ENCODE measurements at regions of chr2 and their contacts with region 1.

Region 1: GRCh38 chr2:171703574-171704347 is 16.5 kb downstream of the DYNC1I2 start:
- DNase-seq: no peak
- ATAC-seq: no peak
- H3K4me3 Mint-ChIP-seq: no peak overlapping the region
- H3K27ac Mint-ChIP-seq: no peak overlapping the region
- H3K4me1 Mint-ChIP-seq: peaks cover 8% of the 10 kb centered on the region
- H3K27me3 Mint-ChIP-seq: no peaks in the 10 kb centered on the region
- CTCF ChIP-seq: peak; percentile 76

Region 2: DNA sequence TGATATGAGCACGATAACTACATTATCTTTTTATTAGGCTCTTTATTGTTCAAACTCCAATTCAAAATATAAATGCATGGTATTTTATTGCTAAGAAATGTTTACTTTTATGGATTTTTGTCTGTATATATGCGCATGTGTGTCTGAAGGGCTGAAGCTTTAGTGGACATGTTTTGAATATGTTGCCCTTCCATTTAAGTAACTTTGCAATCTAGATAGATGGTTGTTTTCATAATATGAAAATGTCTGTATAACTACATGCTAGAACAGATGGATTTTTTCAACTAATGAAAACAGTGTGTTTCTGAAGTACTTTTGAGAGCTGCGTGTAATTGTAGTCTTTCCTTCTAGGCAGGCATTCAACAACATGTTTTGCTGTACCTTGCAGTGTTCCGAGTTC is 251.0 kb before region 1 on chr2:
- CTCF ChIA-PET with region 1: no interaction called
- POLR2A ChIA-PET with region 1: no interaction called
- intact Hi-C with region 1: no loop called
- DNase-seq: no peak
- ATAC-seq: no peak
- H3K4me3 Mint-ChIP-seq: no peak overlapping the region
- H3K27ac Mint-ChIP-seq: no peak overlapping the region
- H3K4me1 Mint-ChIP-seq: peaks cover 2% of the 10 kb centered on the region
- H3K27me3 Mint-ChIP-seq: no peaks in the 10 kb centered on the region
- CTCF ChIP-seq: no peak

Region 3: DNA sequence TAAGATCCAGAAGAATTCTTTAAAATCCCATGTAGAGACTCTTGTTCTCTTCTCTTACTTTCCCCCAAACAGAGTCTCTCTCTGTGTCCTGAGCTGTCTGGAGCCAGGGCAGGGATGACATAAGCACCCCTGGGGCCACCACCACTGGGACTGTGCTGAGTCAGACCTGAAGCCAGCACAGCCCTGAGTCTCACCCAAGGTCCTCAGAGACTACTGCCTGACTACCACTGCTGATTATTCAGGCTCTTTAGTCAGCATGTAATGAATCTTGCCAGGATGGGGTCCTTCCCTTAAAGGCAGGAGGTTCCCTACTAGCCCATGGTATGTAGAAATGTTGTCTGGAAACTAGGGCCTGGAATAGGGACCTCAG is 51.4 kb before region 1 on chr2:
- CTCF ChIA-PET with region 1: no interaction called
- POLR2A ChIA-PET with region 1: no interaction called
- intact Hi-C with region 1: no loop called
- DNase-seq: no peak
- ATAC-seq: no peak
- H3K4me3 Mint-ChIP-seq: no peak overlapping the region
- H3K27ac Mint-ChIP-seq: no peak overlapping the region
- H3K4me1 Mint-ChIP-seq: no peaks in the 10 kb centered on the region
- H3K27me3 Mint-ChIP-seq: peaks cover 28% of the 10 kb centered on the region
- CTCF ChIP-seq: no peak

Region 4: DNA sequence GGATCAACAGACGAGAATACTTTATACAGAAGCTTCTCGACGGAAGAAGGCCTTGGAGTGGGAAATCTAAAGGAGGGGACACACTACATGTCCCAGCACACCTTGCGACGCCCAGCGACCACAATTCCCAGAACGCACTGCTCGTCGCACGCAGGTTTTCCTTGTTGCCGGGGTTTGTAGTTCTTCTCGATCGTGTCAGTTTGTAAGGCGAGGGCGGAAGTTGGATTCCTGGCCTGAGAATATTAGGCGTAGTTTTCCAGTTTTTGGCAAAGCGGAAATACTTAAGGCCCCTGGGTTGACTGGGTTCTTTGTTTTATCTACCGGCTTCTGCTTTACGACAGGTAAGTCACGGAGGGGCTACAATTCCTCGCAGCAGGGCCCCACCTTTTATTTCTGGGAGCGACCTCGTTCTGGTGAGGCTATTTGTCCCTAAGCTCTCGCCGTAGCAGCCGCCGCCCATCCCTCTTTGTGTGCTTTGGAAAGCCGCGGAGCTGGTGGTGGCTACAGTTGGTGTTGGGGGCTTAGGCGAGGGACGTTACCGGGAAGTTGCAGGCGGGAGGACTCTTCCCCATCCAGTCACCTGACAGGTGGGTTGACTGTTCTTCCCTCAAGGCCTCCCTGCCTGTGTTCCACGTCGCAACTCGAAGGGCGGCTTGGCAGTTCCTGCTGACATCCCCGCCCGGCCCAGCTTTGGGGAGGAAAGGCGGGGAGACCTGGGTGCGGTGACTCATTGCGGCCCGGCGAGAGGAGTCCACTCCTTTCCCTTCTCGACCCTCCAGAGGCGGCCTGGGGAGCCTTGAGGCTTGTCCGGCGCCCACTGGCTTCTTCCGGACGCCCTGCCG is 16.3 kb before region 1 on chr2 and contains the start of gene DYNC1I2:
- CTCF ChIA-PET with region 1: interaction called, 25 read pairs
- POLR2A ChIA-PET with region 1: no interaction called
- intact Hi-C with region 1: no loop called
- DNase-seq: peak; percentile 83
- ATAC-seq: peak; percentile 85
- H3K4me3 Mint-ChIP-seq: peak within 1 kb of the TSS; percentile 89
- H3K27ac Mint-ChIP-seq: peak within 1 kb of the TSS; percentile 88
- H3K4me1 Mint-ChIP-seq: peaks cover 17% of the 10 kb centered on the region
- H3K27me3 Mint-ChIP-seq: no peaks in the 10 kb centered on the region
- CTCF ChIP-seq: no peak
- total RNA-seq, gene DYNC1I2: 39.9 to 40.0 TPM

Region 5: DNA sequence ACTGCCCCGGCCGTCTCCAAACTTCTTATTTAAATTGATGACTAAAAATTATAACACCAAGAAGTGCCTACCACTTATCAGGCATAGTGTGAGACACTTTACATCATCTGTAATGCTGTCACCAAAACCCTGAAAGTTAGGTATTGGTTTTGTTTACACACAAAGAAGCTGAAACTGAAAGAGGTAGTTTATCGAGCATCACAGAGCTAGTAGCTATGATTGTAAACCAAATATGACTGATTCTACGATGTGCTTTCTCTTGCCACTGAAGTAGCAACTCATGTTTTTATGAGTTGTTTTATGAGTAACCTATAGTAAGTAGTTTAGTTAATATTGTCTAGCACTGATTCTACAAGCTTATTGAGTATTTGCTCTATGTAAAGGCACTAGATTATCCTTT is 15.0 kb after region 1 on chr2:
- CTCF ChIA-PET with region 1: interaction called, 15 read pairs
- POLR2A ChIA-PET with region 1: no interaction called
- intact Hi-C with region 1: no loop called
- DNase-seq: no peak
- ATAC-seq: peak; percentile 58
- H3K4me3 Mint-ChIP-seq: no peak overlapping the region
- H3K27ac Mint-ChIP-seq: no peak overlapping the region
- H3K4me1 Mint-ChIP-seq: no peaks in the 10 kb centered on the region
- H3K27me3 Mint-ChIP-seq: no peaks in the 10 kb centered on the region
- CTCF ChIP-seq: no peak

Region 6: GRCh38 chr2:171723724-171724683 is 20.2 kb after region 1 on chr2:
- CTCF ChIA-PET with region 1: interaction called, 15 read pairs
- POLR2A ChIA-PET with region 1: no interaction called
- intact Hi-C with region 1: no loop called
- DNase-seq: no peak
- ATAC-seq: no peak
- H3K4me3 Mint-ChIP-seq: no peak overlapping the region
- H3K27ac Mint-ChIP-seq: no peak overlapping the region
- H3K4me1 Mint-ChIP-seq: no peaks in the 10 kb centered on the region
- H3K27me3 Mint-ChIP-seq: no peaks in the 10 kb centered on the region
- CTCF ChIP-seq: no peak

Region 7: DNA sequence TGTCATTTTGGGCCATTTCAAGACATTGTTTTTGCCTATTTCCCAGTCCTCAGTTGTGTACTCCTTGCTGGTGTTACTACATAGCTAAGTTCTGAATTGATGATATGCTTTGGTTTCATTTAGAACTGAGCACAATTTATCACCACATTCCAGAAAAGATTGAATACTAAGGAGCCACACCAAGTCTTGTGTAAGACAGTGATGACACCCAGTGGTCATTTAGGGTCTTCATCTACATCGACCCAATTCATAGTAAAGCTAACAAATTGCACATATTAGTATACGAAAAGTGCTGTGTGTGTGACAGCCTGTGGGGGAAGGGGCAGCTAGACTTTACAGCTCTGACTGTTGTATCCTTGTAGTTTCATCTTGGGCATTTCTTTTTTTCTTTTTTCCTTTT is 409.9 kb after region 1 on chr2:
- CTCF ChIA-PET with region 1: interaction called, 11 read pairs
- POLR2A ChIA-PET with region 1: interaction called, 3 read pairs
- intact Hi-C with region 1: no loop called
- DNase-seq: no peak
- ATAC-seq: no peak
- H3K4me3 Mint-ChIP-seq: no peak overlapping the region
- H3K27ac Mint-ChIP-seq: no peak overlapping the region
- H3K4me1 Mint-ChIP-seq: no peaks in the 10 kb centered on the region
- H3K27me3 Mint-ChIP-seq: peaks cover 27% of the 10 kb centered on the region
- CTCF ChIP-seq: no peak

Region 8: GRCh38 chr2:172131713-172132555 is 428.2 kb after region 1 on chr2:
- CTCF ChIA-PET with region 1: interaction called, 47 read pairs
- POLR2A ChIA-PET with region 1: no interaction called
- intact Hi-C with region 1: no loop called
- DNase-seq: no peak
- ATAC-seq: no peak
- H3K4me3 Mint-ChIP-seq: no peak overlapping the region
- H3K27ac Mint-ChIP-seq: no peak overlapping the region
- H3K4me1 Mint-ChIP-seq: no peaks in the 10 kb centered on the region
- H3K27me3 Mint-ChIP-seq: peaks cover 3% of the 10 kb centered on the region
- CTCF ChIP-seq: no peak

Measured in activated CD8-positive, alpha-beta T cell treated with anti-CD3 and anti-CD28 coated beads for 36 hours (primary cell).